ENCODE measurements at regions of chr7 and their contacts with region 1.

Region 1: GRCh38 chr7:65981965-65982792 is at the start of gene GUSB:
- DNase-seq: peak; percentile 80 to 83
- ATAC-seq: peak; percentile 91 to 97
- H3K4me3 ChIP-seq: peak within 1 kb of the TSS; percentile 89 to 98 (median 92)
- H3K27ac ChIP-seq: peak within 1 kb of the TSS; percentile 78 to 84 (median 82)
- H3K4me1 ChIP-seq: peaks cover 15 to 19% of the 10 kb centered on the region in 2 donors
- H3K27me3 ChIP-seq: no peaks in the 10 kb centered on the region
- CTCF ChIP-seq: peak in 1 of 5 experiments; percentile 8
- POLR2A ChIP-seq: peak; percentile 72 to 78
- total RNA-seq, gene GUSB: 2.4 to 7.1 (median 5.8) TPM

Region 2: DNA sequence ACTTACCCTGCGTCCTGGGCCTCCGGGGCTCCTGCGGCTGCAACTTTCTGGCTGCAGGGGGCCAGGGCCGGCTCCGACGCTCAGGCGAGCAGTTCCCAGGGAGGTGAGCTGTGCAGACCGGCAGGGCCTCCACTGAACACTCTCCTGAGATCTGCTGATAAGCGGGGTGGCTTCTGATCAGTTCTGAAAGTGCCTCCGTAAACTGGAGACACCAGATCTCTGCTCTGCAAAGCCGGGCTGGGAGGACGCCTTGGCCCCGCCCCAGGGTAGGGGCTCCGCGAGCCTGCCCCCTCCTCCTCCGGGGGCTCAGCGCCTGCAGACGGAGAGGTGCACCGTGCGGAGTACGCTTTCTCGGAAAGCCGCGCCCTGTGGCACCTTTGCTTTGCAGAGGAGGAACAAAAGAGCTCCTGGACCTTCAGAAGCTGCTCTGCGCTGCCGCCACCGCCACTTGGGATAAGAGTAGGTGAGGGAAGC is 250.6 kb before region 1 on chr7:
- in situ Hi-C with region 1: loop called in 3 of 4 experiments (anchors 25 kb)
- intact Hi-C with region 1: no loop called
- DNase-seq: no peak
- ATAC-seq: no peak
- H3K4me3 ChIP-seq: no peak overlapping the region
- H3K27ac ChIP-seq: no peak overlapping the region
- H3K4me1 ChIP-seq: no peaks in the 10 kb centered on the region
- H3K27me3 ChIP-seq: no peaks in the 10 kb centered on the region
- CTCF ChIP-seq: no peak
- POLR2A ChIP-seq: no peak

Region 3: DNA sequence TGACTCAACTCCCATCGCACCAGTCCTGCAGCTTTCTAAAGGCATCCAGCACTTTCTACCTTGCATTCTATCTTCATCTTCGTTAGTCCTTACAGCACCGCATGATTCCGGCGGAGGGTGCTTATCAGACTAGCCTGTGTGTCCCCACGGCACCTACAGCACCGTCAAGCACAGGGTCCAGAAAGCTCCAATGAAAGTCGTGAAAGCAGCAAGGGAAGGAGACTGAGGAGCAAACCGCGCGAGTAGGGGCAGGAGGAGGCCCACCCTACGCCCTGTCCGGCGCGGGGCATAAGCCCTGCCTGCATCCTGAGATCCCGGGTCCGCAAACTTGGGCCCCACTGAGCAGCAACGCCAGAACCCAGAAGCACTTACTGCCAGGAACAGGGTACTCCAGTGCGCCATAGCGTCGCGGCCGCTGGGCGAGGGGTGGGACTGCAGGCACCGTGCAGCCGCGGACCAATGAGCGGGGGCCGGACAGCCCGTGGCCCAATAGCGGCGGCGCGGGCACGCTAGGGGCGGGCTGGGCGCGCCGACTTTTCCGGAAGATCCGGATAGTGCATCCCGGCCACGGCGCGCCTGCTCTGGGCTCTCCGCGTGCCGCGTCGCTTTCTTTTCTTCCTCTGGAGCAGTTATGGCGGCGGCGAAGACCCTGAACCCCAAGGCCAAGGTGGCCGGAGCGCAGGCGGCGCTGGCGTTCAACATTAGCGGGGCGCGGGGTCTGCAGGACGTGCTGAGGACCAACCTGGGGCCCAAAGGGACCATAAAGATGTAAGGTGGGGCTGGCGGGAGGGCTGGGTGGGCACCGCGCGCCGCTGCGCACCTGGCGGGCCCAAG is 231.5 kb before region 1 on chr7:
- in situ Hi-C with region 1: loop called in 3 of 4 experiments (anchors 25 kb)
- intact Hi-C with region 1: loop called (anchors 5 kb)
- DNase-seq: peak; percentile 78 to 81
- ATAC-seq: peak; percentile 93 to 95
- H3K4me3 ChIP-seq: peak overlapping the region; percentile 94 to 98 (median 96)
- H3K27ac ChIP-seq: peak overlapping the region; percentile 80 to 86 (median 82)
- H3K4me1 ChIP-seq: peaks cover 12 to 13% of the 10 kb centered on the region in 2 donors
- H3K27me3 ChIP-seq: no peaks in the 10 kb centered on the region
- CTCF ChIP-seq: peak in 3 of 5 experiments; percentile 27 to 42 (median 39)
- POLR2A ChIP-seq: peak; percentile 31 to 52

Region 4: GRCh38 chr7:65872776-65873581 is 109.2 kb before region 1 on chr7 and contains the start of gene VKORC1L1:
- in situ Hi-C with region 1: no loop called
- intact Hi-C with region 1: loop called (anchors 2 kb)
- DNase-seq: peak; percentile 89 to 95
- ATAC-seq: peak; percentile 88 to 92
- H3K4me3 ChIP-seq: peak within 1 kb of the TSS; percentile 83 to 100 (median 96)
- H3K27ac ChIP-seq: peak within 1 kb of the TSS; percentile 84 to 93 (median 89)
- H3K4me1 ChIP-seq: no peaks in the 10 kb centered on the region
- H3K27me3 ChIP-seq: no peaks in the 10 kb centered on the region
- CTCF ChIP-seq: no peak
- POLR2A ChIP-seq: peak; percentile 66 to 67
- total RNA-seq, gene VKORC1L1: 11.5 to 17.5 (median 14.9) TPM

Region 5: DNA sequence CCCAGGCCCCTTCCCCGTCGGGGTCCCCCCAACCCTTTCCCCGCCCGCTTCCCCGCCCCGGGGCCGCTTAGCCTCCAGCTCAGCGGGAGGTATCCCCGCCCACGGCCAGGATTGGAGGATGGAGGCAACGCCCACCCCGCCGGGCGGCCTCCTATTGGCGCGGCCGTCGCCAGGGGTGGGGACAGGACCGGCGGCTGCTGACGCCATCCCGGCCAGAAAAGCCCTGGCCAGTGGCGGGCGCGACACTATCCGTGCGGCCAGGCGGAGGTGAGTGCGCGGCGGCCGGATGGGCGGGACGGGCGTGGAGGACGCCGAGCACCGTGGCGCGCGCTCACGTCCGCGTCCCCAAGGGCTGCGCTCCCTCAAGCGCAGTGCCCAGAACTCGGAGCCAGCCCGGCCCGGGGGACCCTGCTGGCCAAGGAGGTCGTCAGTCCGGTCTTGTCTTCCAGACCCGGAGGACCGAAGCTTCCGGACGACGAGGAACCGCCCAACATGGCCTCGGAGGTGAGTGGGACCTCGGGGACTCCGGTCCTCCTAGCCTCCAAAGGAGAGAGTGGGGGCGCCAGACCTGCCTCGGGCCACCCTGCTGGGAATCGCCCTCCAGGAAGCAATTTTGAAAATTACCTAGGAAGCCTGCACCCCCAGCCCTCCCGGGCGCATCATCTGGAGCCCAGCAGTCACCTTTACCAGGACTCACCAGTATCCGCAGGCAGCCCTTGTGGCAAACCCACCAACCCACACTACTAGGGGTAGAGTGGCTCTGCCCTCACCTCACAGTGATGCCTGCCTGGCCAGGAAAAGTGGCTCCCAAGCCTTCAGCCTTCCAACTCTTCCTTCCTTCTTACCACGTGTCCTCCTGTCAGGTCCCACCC is 93.6 kb after region 1 on chr7 and contains the start of gene ASL:
- in situ Hi-C with region 1: no loop called
- intact Hi-C with region 1: loop called (anchors 1 kb)
- DNase-seq: peak; percentile 85 to 89
- ATAC-seq: peak; percentile 93 to 94
- H3K4me3 ChIP-seq: peak within 1 kb of the TSS; percentile 67 to 91 (median 82)
- H3K27ac ChIP-seq: peak within 1 kb of the TSS; percentile 62 to 78 (median 73)
- H3K4me1 ChIP-seq: peaks cover 12% of the 10 kb centered on the region in 2 donors
- H3K27me3 ChIP-seq: no peaks in the 10 kb centered on the region
- CTCF ChIP-seq: peak in 1 of 5 experiments; percentile 13
- POLR2A ChIP-seq: peak; percentile 80 to 96
- total RNA-seq, gene ASL: 2.5 to 8.7 (median 4.9) TPM

Region 6: DNA sequence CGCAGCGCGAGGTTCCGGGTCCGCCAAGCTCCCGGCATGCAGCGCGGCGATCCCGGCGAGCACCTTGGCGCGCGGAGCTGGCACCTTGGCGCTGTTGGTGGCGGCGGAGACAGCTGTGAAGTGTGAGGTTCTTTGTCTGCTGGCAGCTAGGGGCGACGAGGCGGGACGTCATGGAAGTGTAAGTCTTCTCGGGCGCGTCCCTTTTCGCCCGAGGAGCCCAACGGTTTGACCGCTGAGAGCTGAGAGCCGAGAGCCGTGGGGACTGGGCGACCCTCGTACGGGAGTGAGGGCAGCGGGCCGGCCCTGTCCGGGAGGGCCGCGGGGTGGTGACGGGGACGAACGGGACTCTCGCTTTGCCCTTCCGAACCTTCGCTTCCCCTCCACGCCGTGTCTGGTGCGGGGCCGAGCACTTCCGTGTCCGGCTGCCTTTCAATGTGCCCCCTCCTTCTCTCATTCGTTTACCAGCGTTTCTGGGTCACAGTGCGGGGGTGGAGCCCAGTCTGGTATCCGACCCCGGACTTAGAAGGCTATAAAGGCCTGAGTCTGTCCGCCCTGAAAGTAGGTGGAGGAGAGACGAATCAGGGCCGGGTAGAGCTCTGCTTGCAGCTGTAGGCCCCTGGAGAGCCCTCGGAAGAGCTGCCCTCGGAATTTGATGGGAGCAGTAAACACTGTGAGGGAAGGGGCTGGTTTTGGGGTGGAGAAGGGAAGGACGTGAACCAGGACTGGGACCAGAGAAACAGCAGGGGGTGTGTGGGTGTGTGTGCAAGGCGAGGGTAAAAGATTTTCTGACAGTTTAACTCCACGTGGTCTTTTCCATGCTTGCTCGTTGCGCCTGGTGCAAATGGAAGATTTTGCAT is 132.8 kb after region 1 on chr7 and contains the start of gene CRCP:
- in situ Hi-C with region 1: no loop called
- intact Hi-C with region 1: loop called (anchors 1 kb)
- DNase-seq: peak; percentile 68 to 78
- ATAC-seq: peak; percentile 91 to 94
- H3K4me3 ChIP-seq: peak within 1 kb of the TSS; percentile 89 to 98 (median 95)
- H3K27ac ChIP-seq: peak within 1 kb of the TSS; percentile 96 to 99 (median 98)
- H3K4me1 ChIP-seq: peaks cover 27 to 45% of the 10 kb centered on the region in 2 donors
- H3K27me3 ChIP-seq: no peaks in the 10 kb centered on the region
- CTCF ChIP-seq: peak in 2 of 5 experiments; percentile 11 to 18
- POLR2A ChIP-seq: peak; percentile 43 to 69
- total RNA-seq, gene CRCP: 19.2 to 21.3 (median 20.4) TPM

Measured in gastrocnemius medialis (tissue), 4 donors.